ENCODE measurements at regions of chr17 and their contacts with region 1.

Region 1: DNA sequence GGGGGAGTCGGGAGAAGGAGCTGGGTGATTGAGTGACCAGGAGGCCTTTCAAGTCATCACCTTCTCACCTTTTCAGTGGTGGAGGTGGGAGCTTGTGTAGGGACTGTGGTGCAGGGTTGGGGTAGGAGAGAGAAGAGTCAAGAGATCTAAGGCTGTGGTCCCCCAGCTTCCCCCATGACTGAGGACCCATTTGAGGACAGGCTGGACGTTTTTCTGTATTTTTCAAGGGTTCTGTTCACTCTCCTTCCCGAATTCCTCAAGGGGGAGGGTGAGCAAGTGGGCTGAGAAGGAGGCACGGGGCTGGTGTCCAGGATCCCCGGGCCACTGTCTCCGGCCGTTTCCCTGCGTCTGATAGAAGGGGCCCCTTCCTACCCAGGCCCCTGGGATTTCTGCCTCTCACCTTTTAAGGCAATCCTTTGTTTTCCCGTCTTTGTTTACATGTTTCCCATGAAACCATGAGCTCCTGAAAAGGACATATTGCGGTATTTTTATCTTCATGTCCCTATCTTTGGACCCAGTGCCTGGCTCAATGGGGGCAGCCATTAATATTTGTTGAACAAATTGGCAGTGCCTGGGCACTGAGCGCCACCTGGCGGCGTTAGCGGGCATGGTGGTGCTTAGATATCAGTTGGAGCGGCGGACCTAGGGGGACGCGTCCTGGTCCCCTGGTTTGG is 9.2 kb upstream of the CD300A start:
- DNase-seq: peak; percentile 63
- ATAC-seq: peak; percentile 56
- H3K4me3 ChIP-seq: no peak overlapping the region
- H3K27ac ChIP-seq: no peak overlapping the region
- H3K4me1 ChIP-seq: peaks cover 22 to 29% of the 10 kb centered on the region in 2 experiments
- H3K27me3 ChIP-seq: no peaks in the 10 kb centered on the region
- CTCF ChIP-seq: peak; percentile 97 to 100 (median 99)
- POLR2A ChIP-seq: no peak
- RAD21 ChIP-seq: peak; percentile 100

Region 2: DNA sequence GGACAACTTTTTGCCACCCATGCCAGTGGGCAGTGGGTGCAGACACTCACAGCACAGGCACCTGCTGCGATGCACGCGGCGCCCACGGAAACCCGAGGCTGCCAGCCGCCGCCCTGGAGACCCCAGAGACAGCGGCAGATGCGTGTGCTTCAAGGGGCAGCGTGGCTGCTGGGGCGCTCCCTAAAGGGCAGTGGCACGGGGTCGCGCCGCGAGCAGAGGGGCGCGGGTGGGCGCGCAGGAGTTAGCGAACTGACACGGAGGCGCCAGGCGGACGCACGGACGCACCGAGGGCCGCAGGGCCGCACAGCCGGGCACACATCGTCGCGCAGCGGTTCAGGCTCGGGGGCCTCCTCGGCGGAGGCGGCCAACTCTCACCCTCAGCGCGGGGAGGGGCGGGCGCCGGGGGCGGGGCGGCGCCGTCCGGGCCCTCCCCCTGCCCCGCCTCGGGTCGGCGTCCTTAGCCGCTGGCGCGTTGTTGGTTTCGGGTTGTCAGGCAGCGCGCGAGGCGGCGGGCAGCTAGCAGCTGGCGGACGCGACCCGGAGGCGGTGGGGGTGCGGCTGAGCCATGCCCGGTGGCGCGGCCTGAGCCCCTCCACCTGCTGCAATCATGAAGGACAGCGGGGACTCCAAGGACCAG is 131.4 kb before region 1 on chr17 and contains the start of gene KIF19:
- CTCF ChIA-PET with region 1: no interaction called
- POLR2A ChIA-PET with region 1: no interaction called
- RAD21 ChIA-PET with region 1: no interaction called
- intact Hi-C with region 1: no loop called
- DNase-seq: no peak
- ATAC-seq: peak; percentile 63
- H3K4me3 ChIP-seq: no peak within 1 kb of the TSS
- H3K27ac ChIP-seq: no peak within 1 kb of the TSS
- H3K4me1 ChIP-seq: no peaks in the 10 kb centered on the region
- H3K27me3 ChIP-seq: 0 out of 2 replicates have a peak, but pooled peaks cover 5% of the 10 kb centered on the region
- CTCF ChIP-seq: no peak
- POLR2A ChIP-seq: no peak
- RAD21 ChIP-seq: no peak
- total RNA-seq, gene KIF19: 0.15 TPM

Region 3: DNA sequence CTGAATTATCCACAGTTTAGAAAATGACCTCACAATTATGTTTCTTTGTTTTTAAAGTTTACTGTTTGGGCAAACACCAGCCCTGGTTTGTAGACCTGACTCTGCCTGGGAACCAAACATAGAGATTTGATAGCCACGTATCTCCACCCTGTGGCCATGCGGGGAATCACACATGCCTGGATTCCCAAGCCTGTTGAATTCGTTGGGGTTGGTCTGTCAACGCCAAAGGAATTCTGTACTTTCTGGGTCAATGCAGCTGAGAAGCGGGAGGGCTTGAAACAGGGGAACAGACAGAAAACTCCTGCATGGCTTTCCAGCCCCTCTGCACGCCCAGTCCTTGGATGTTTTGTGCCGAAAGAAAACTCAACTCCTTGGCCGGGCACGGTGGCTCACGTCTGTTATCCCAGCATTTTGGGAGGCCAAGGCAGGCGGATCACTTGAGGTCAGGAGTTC is 36.1 kb after region 1 on chr17:
- CTCF ChIA-PET with region 1: no interaction called
- POLR2A ChIA-PET with region 1: no interaction called
- RAD21 ChIA-PET with region 1: no interaction called
- intact Hi-C with region 1: loop called (anchors 1 kb)
- DNase-seq: peak; percentile 73
- ATAC-seq: peak; percentile 98
- H3K4me3 ChIP-seq: no peak overlapping the region
- H3K27ac ChIP-seq: no peak overlapping the region
- H3K4me1 ChIP-seq: no peaks in the 10 kb centered on the region
- H3K27me3 ChIP-seq: no peaks in the 10 kb centered on the region
- CTCF ChIP-seq: peak; percentile 97 to 99 (median 97)
- POLR2A ChIP-seq: no peak
- RAD21 ChIP-seq: peak; percentile 97

Measured in HCT116 (cell line).